Activated CD4-positive, alpha-beta memory T cell treated with anti-CD3 and anti-CD28 coated beads for 36 hours (primary cell): ENCODE measurements at regions of chr13 and their contacts with region 1.

Region 1: GRCh38 chr13:27977476-27978300 is 8.6 kb upstream of the CDX2 start:
- DNase-seq: no peak
- H3K4me3 Mint-ChIP-seq: no peak overlapping the region
- H3K27ac Mint-ChIP-seq: peak overlapping the region; percentile 74
- H3K4me1 Mint-ChIP-seq: peaks cover 26% of the 10 kb centered on the region
- H3K27me3 Mint-ChIP-seq: peaks cover 80% of the 10 kb centered on the region

Region 2: DNA sequence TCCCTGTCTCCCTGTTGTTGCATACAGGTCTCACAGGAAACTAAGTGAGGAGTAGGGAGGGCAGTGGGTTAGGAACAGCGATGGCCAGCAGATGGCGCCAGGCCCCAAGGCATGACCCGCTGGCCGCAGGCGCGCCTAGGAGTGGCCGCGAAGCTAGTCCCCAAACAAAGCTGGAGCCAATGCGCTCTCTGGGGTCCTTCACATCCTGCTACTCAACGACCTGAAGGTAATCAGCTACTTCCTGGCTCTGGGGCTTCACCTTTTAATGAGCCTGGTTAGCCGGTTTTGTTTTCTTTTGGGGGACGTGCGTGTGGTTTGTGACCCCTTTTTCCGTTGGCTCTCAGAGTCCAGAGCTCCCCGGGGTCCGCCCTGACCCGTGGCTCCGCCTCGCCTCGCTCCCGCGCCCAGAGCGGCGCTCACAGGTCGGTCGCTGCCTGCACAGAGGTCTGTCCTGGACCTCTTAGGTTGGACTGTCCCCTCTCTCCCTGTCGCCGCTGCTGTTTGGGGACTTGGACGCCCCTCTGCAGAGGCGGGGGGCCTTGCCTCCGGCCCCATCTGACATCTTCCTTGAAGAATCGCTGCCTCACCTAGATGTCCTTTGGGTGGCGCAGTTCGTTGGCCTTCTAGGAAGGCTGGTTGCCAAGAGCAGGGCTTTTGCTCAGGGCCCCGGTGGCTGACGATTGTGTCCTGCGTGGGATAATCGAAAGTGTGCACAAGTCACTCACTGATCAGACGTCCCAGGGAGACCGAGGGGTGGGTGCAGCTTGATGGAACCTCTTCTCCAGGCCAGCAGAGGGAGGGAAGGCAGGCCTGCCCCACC is 615.4 kb before region 1 on chr13:
- CTCF ChIA-PET with region 1: interaction called, 42 read pairs
- POLR2A ChIA-PET with region 1: no interaction called
- intact Hi-C with region 1: loop called (anchors 5 kb)
- DNase-seq: peak; percentile 85
- H3K4me3 Mint-ChIP-seq: no peak overlapping the region
- H3K27ac Mint-ChIP-seq: no peak overlapping the region
- H3K4me1 Mint-ChIP-seq: no peaks in the 10 kb centered on the region
- H3K27me3 Mint-ChIP-seq: peaks cover 22% of the 10 kb centered on the region

Region 3: GRCh38 chr13:27533155-27533643 is 444.5 kb before region 1 on chr13:
- CTCF ChIA-PET with region 1: no interaction called
- POLR2A ChIA-PET with region 1: no interaction called
- intact Hi-C with region 1: loop called (anchors 2 kb)
- DNase-seq: peak; percentile 67
- H3K4me3 Mint-ChIP-seq: no peak overlapping the region
- H3K27ac Mint-ChIP-seq: no peak overlapping the region
- H3K4me1 Mint-ChIP-seq: peaks cover 8% of the 10 kb centered on the region
- H3K27me3 Mint-ChIP-seq: no peaks in the 10 kb centered on the region

Region 4: DNA sequence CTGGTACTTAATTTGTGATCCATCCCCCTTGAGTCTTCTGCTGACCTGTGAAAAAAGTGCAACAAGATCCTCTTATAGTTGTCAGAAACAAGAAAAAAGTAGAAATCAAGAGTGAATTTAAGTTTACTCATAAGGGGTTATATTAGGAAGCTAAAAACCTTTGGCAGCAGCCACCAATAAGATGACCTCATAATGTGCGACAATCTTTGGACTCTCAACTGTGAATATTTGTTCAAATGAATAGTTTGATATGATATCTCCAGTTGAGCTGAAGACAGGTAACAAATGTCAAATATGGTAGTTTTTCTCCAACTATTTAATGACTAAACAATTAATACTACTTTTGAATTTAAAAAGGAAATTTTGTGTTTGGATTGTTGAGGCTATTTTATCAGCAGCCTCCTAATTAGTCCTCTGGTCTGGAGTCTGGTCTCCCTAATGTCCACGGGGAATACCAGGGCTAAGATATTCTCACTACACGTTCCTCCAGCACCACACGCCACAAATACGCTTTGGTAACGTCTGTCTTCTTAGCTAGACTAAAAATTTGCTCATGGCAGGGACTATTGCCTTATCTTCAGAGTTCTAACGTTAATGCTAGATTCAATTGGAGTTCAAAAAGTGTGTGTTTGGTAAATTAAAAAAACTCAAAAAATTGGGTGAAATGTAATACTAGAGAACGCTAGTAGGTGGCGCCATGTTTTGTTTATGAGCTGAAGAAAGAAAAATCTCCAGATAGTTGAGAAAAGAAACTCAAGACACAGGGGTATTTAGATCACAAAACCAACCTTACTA is 108.8 kb before region 1 on chr13:
- CTCF ChIA-PET with region 1: interaction called, 10 read pairs
- POLR2A ChIA-PET with region 1: no interaction called
- intact Hi-C with region 1: no loop called
- DNase-seq: no peak
- H3K4me3 Mint-ChIP-seq: no peak overlapping the region
- H3K27ac Mint-ChIP-seq: no peak overlapping the region
- H3K4me1 Mint-ChIP-seq: no peaks in the 10 kb centered on the region
- H3K27me3 Mint-ChIP-seq: peaks cover 21% of the 10 kb centered on the region

Region 5: GRCh38 chr13:27953676-27954405 is 23.8 kb before region 1 on chr13:
- CTCF ChIA-PET with region 1: interaction called, 18 read pairs
- POLR2A ChIA-PET with region 1: no interaction called
- intact Hi-C with region 1: no loop called
- DNase-seq: peak; percentile 75
- H3K4me3 Mint-ChIP-seq: peak overlapping the region; percentile 58
- H3K27ac Mint-ChIP-seq: no peak overlapping the region
- H3K4me1 Mint-ChIP-seq: peaks cover 10% of the 10 kb centered on the region
- H3K27me3 Mint-ChIP-seq: peaks cover 57% of the 10 kb centered on the region

Region 6: GRCh38 chr13:28047757-28048388 is 70.2 kb after region 1 on chr13:
- CTCF ChIA-PET with region 1: no interaction called
- POLR2A ChIA-PET with region 1: no interaction called
- intact Hi-C with region 1: no loop called
- DNase-seq: no peak
- H3K4me3 Mint-ChIP-seq: no peak overlapping the region
- H3K27ac Mint-ChIP-seq: no peak overlapping the region
- H3K4me1 Mint-ChIP-seq: peaks cover 20% of the 10 kb centered on the region
- H3K27me3 Mint-ChIP-seq: peaks cover 2% of the 10 kb centered on the region

Region 7: DNA sequence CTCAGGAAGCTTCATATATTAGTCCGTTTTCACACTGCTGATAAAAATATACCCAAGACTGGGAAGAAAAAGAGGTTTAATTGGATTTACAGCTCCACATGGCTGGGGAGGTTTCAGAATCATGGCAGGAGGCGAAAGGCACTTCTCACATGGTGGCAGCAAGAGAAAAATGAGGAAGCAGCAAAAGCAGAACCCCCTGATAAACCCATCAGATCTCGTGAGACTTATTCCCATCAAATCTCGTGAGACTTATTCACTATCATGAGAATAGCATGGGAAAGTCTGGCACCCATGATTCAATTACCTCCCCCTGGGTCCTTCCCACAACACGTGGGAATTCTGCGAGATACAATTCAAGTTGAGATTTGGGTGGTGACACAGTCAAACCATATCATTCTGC is 99.5 kb after region 1 on chr13:
- CTCF ChIA-PET with region 1: no interaction called
- POLR2A ChIA-PET with region 1: no interaction called
- intact Hi-C with region 1: no loop called
- DNase-seq: no peak
- H3K4me3 Mint-ChIP-seq: no peak overlapping the region
- H3K27ac Mint-ChIP-seq: no peak overlapping the region
- H3K4me1 Mint-ChIP-seq: no peaks in the 10 kb centered on the region
- H3K27me3 Mint-ChIP-seq: peaks cover 6% of the 10 kb centered on the region